Transverse colon (tissue), 4 donors: ENCODE measurements at regions of chr15 and their contacts with region 1.

Region 1: GRCh38 chr15:34927726-34928125 is 41.8 kb downstream of the AQR start:
- DNase-seq: no peak
- H3K4me3 ChIP-seq: no peak overlapping the region
- H3K27ac ChIP-seq: no peak overlapping the region
- H3K4me1 ChIP-seq: no peaks in the 10 kb centered on the region
- H3K27me3 ChIP-seq: no peaks in the 10 kb centered on the region
- CTCF ChIP-seq: no peak
- EP300 ChIP-seq: no peak
- POLR2A ChIP-seq: no peak

Region 2: DNA sequence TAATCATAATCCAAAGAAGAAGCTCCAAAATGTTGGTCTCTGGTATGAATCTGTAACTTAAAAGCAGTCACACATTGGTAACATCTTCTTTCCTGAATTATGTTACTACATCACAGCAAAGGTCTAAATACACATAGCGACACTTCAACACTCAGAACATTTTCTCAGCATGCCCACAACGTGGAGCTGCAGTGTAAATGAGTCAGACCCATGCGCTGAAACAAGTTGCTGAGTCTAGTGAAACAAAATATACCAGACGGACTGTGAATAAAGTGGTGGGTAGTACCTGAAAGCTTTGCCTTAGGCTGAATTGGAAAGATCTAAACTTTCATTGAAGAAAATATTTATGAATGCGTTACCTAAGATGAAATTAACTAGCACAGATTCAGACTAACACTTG is 311.1 kb before region 1 on chr15:
- in situ Hi-C with region 1: loop called in 1 of 4 experiments (anchors 10 kb)
- intact Hi-C with region 1: loop called (anchors 10 kb)
- DNase-seq: no peak
- H3K4me3 ChIP-seq: no peak overlapping the region
- H3K27ac ChIP-seq: no peak overlapping the region
- H3K4me1 ChIP-seq: no peaks in the 10 kb centered on the region
- H3K27me3 ChIP-seq: peaks cover 6% of the 10 kb centered on the region
- CTCF ChIP-seq: no peak
- EP300 ChIP-seq: no peak
- POLR2A ChIP-seq: no peak

Region 3: GRCh38 chr15:34621675-34622074 is 306.1 kb before region 1 on chr15:
- in situ Hi-C with region 1: loop called in 1 of 4 experiments (anchors 10 kb)
- intact Hi-C with region 1: loop called (anchors 10 kb)
- DNase-seq: no peak
- H3K4me3 ChIP-seq: no peak overlapping the region
- H3K27ac ChIP-seq: no peak overlapping the region
- H3K4me1 ChIP-seq: no peaks in the 10 kb centered on the region
- H3K27me3 ChIP-seq: no peaks in the 10 kb centered on the region
- CTCF ChIP-seq: peak in 3 of 5 experiments; percentile 7 to 17 (median 9)
- EP300 ChIP-seq: no peak
- POLR2A ChIP-seq: no peak

Region 4: DNA sequence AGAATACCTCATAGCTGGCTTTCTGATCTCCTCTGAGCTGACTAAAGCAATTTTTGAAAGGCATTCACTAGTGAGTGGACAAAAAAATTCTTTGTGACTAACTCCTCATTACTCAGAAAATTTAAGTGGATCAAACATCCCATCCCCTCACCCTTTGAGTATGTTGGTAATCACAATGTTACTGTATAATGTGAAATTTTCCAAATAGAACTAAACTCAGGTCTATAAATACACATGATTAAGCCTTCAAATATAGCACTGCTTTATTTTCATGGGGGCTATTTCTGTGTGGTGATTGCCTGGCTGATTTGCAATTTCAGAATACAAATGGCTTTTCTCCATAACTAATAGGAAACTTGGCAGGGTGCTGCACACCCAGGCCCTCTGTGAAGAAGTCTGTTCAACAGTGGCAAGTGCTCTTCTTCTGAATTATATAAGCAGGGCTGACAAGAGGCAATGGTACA is 86.4 kb before region 1 on chr15:
- in situ Hi-C with region 1: no loop called
- intact Hi-C with region 1: no loop called
- DNase-seq: no peak
- H3K4me3 ChIP-seq: no peak overlapping the region
- H3K27ac ChIP-seq: no peak overlapping the region
- H3K4me1 ChIP-seq: no peaks in the 10 kb centered on the region
- H3K27me3 ChIP-seq: no peaks in the 10 kb centered on the region
- CTCF ChIP-seq: no peak
- EP300 ChIP-seq: no peak
- POLR2A ChIP-seq: no peak